Activated naive CD4-positive, alpha-beta T cell treated with anti-CD3 and anti-CD28 coated beads for 36 hours (primary cell): ENCODE measurements at regions of chr4 and their contacts with region 1.

Region 1: GRCh38 chr4:10013722-10014121 is 7.6 kb downstream of the SLC2A9 start:
- DNase-seq: peak; percentile 73
- H3K4me3 Mint-ChIP-seq: no peak overlapping the region
- H3K27ac Mint-ChIP-seq: no peak overlapping the region
- H3K4me1 Mint-ChIP-seq: peaks cover 5% of the 10 kb centered on the region
- H3K27me3 Mint-ChIP-seq: no peaks in the 10 kb centered on the region

Region 2: GRCh38 chr4:9691238-9692065 is 322.3 kb before region 1 on chr4:
- CTCF ChIA-PET with region 1: interaction called, 17 read pairs
- intact Hi-C with region 1: no loop called
- DNase-seq: peak; percentile 93
- H3K4me3 Mint-ChIP-seq: peak overlapping the region; percentile 82
- H3K27ac Mint-ChIP-seq: peak overlapping the region; percentile 77
- H3K4me1 Mint-ChIP-seq: peaks cover 24% of the 10 kb centered on the region
- H3K27me3 Mint-ChIP-seq: no peaks in the 10 kb centered on the region

Region 3: DNA sequence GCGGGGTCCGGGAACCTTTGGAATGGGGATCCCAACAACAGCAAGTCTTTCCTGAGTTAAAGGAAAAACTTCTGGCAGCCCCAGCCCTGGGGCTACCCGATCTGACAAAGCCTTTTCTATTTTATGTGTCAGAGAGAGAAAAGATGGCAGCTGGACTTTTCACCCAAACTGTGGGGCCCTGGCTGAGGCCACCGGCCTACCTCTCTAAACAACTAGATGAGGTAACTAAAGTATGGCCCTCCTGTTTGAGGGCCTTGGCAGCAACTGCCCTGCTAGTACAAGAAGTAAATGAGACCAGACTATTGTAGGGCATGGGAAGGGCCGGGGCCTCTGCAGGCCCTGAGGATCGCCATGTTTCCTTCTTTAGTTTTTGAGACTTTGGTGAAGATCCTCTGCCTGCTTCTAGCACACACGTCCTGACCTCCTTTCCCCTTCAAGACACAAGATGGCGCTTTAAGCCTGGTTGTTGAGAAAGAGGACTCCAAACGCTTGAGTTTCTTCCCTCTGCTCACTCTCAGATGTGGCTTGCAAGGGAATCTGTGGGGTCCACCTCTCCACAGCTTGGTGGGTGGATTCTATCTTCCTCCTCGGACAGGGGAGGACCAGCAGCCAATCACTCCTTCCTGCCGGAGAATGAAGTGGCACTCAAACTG is 250.8 kb before region 1 on chr4:
- CTCF ChIA-PET with region 1: interaction called, 70 read pairs
- intact Hi-C with region 1: loop called (anchors 1 kb)
- DNase-seq: peak; percentile 63
- H3K4me3 Mint-ChIP-seq: no peak overlapping the region
- H3K27ac Mint-ChIP-seq: no peak overlapping the region
- H3K4me1 Mint-ChIP-seq: no peaks in the 10 kb centered on the region
- H3K27me3 Mint-ChIP-seq: peaks cover 16% of the 10 kb centered on the region

Region 4: GRCh38 chr4:9898596-9899305 is 115.0 kb before region 1 on chr4:
- CTCF ChIA-PET with region 1: no interaction called
- intact Hi-C with region 1: loop called (anchors 2 kb)
- DNase-seq: peak; percentile 30
- H3K4me3 Mint-ChIP-seq: no peak overlapping the region
- H3K27ac Mint-ChIP-seq: no peak overlapping the region
- H3K4me1 Mint-ChIP-seq: no peaks in the 10 kb centered on the region
- H3K27me3 Mint-ChIP-seq: no peaks in the 10 kb centered on the region

Region 5: DNA sequence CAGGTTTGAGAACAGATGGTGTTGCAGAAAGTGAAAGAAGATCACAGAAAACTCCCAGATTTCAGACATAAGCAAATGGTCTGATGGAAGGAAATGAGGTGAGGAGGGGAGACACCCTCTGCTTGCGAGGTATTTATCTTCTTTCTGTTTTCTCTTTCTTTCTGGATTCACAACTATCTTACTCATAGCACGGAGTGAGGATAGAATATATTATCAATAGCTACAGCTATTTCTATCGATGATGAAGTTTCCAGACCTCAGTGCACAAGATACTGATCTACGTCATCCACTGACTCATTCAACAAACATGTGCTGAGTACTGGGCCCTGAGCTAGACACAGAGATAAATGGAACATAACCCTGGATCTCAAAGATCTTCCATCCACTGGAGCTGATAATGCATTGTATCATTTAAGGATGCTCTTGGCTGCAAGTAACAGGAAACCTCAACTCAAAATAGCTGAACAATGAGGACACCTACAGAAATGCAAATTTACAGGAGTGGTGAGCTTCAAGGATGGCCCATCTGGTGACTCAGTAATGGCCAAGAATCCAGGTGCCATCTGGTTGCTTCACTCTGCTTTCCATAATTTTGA is 13.7 kb before region 1 on chr4:
- CTCF ChIA-PET with region 1: interaction called, 13 read pairs
- intact Hi-C with region 1: no loop called
- DNase-seq: no peak
- H3K4me3 Mint-ChIP-seq: no peak overlapping the region
- H3K27ac Mint-ChIP-seq: peak overlapping the region; percentile 23
- H3K4me1 Mint-ChIP-seq: peaks cover 11% of the 10 kb centered on the region
- H3K27me3 Mint-ChIP-seq: no peaks in the 10 kb centered on the region